ENCODE measurements at regions of chr21 and their contacts with region 1.

Region 1: GRCh38 chr21:25396135-25396711 is 211.1 kb downstream of the MRPL39 start:
- DNase-seq: peak; percentile 88
- ATAC-seq: peak; percentile 91
- H3K4me3 ChIP-seq: peak overlapping the region; percentile 54
- H3K27ac ChIP-seq: peak overlapping the region; percentile 92
- H3K4me1 ChIP-seq: peaks cover 20% of the 10 kb centered on the region
- H3K27me3 ChIP-seq: no peaks in the 10 kb centered on the region
- CTCF ChIP-seq: no peak
- EP300 ChIP-seq: peak; percentile 61 to 79
- POLR2A ChIP-seq: no peak
- RAD21 ChIP-seq: no peak

Region 2: GRCh38 chr21:25188677-25189079 is 207.5 kb before region 1 on chr21:
- CTCF ChIA-PET with region 1: no interaction called
- POLR2A ChIA-PET with region 1: no interaction called
- RAD21 ChIA-PET with region 1: no interaction called
- SMC1A ChIA-PET with region 1: no interaction called
- in situ Hi-C with region 1: no loop called
- intact Hi-C with region 1: loop called (anchors 5 kb)
- DNase-seq: peak; percentile 88
- ATAC-seq: peak; percentile 83
- H3K4me3 ChIP-seq: no peak overlapping the region
- H3K27ac ChIP-seq: 0 out of 2 replicates have a peak overlapping the region, but pooled peaks have one; percentile 30
- H3K4me1 ChIP-seq: peaks cover 23% of the 10 kb centered on the region; the same call in 1 of the 2 replicates
- H3K27me3 ChIP-seq: no peaks in the 10 kb centered on the region
- CTCF ChIP-seq: no peak
- EP300 ChIP-seq: peak in 1 of 2 experiments; percentile 64; a peak in 2 of 4 replicates
- POLR2A ChIP-seq: no peak
- RAD21 ChIP-seq: 0 out of 2 replicates have a peak, but pooled peaks have one; percentile 8

Region 3: DNA sequence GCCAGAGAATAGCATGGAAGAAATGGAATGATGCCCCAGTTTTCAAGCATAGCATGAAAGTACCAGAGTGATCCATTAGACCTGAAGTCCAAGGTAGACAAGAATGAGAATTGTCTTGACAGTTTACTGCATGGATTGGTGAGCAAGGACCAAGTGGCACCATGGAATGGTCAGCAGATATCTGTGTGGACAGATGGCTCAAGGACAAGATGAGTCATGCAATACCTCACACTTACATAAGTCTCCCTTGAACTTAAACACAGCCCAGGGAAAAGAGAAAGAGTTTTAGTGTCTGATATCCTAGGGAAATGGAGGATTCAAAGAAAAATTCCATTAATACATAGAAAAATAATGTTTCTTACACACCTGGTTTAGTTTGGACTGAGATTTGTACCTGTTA is 15.9 kb after region 1 on chr21:
- CTCF ChIA-PET with region 1: interaction called, 5 read pairs
- POLR2A ChIA-PET with region 1: interaction called, 3 read pairs
- RAD21 ChIA-PET with region 1: interaction called, 4 read pairs
- SMC1A ChIA-PET with region 1: interaction called, 20 read pairs
- in situ Hi-C with region 1: no loop called
- intact Hi-C with region 1: no loop called
- DNase-seq: no peak
- ATAC-seq: peak; percentile 28; the same call in 2 of the 3 replicates
- H3K4me3 ChIP-seq: no peak overlapping the region
- H3K27ac ChIP-seq: no peak overlapping the region; the same call in 1 of the 2 replicates
- H3K4me1 ChIP-seq: peaks cover 12% of the 10 kb centered on the region
- H3K27me3 ChIP-seq: no peaks in the 10 kb centered on the region
- CTCF ChIP-seq: no peak
- EP300 ChIP-seq: no peak
- POLR2A ChIP-seq: no peak
- RAD21 ChIP-seq: no peak

Region 4: DNA sequence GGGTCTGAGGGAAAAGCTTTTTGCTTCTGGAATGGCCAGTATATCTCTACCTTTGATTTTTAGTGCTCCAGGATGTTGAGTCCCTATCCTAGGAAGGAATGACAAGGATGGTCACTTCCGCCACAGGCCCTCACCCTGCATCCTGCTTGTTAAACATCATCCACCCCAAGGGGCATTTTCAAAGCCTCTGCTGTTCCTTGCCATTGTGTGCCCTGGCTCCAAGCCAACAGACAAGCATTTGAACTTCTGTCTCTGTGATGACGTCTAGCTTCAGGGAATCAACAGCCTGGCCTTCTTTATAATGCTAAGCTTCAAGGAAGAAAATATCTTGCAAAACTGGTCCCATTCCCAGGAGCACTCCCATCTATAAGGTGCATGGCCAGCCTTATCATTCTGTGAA is 230.5 kb after region 1 on chr21:
- CTCF ChIA-PET with region 1: no interaction called
- POLR2A ChIA-PET with region 1: no interaction called
- RAD21 ChIA-PET with region 1: no interaction called
- SMC1A ChIA-PET with region 1: no interaction called
- in situ Hi-C with region 1: no loop called
- intact Hi-C with region 1: no loop called
- DNase-seq: no peak
- ATAC-seq: no peak
- H3K4me3 ChIP-seq: no peak overlapping the region
- H3K27ac ChIP-seq: no peak overlapping the region
- H3K4me1 ChIP-seq: no peaks in the 10 kb centered on the region
- H3K27me3 ChIP-seq: no peaks in the 10 kb centered on the region; a peak in 1 of 4 replicates
- CTCF ChIP-seq: no peak
- EP300 ChIP-seq: no peak
- POLR2A ChIP-seq: no peak
- RAD21 ChIP-seq: no peak

Measured in GM12878 (cell line).